Mammary epithelial cell (primary cell): ENCODE measurements at regions of chr11 and their contacts with region 1.

Region 1: DNA sequence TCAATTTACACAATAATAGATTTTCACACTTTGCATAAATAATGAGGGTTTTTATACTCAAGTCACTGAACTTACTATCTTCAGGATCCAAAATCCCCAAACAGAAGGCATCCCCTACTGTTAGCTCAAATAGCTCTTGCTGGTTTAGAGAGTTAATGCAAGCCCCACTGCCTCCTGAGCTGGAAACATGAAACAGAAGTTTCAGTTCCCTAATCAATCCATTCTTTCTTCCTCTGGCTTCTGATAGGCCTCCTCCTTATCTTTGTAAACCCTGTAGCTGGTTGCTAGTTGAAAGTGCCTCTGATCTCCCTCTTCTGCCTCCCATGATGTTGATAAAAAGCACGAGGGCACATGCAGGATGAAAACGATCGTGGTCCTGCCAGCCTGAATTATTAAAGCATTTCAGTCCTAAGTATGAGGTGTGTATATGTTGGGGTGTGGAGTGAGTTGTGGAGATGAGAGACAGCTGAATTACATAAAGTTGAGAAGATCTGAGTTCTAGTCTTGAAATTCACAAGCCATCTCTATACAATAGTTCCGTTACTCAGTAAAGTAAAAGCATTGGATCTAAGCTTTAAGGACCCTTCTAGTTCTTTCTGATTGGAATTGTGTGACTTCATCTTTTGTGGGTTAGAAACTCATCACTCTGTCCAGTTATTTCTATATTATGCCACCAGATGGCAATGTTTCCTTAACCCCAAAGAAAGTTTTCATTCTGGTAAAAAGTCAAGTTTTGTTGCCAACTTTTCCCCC is 35.0 kb upstream of the EHF start:
- DNase-seq: peak; percentile 55
- H3K4me3 ChIP-seq: no peak overlapping the region
- H3K27ac ChIP-seq: no peak overlapping the region
- H3K4me1 ChIP-seq: no peaks in the 10 kb centered on the region
- H3K27me3 ChIP-seq: no peaks in the 10 kb centered on the region
- CTCF ChIP-seq: peak; percentile 52 to 70

Region 2: GRCh38 chr11:33445761-33446161 is 1140.2 kb before region 1 on chr11:
- CTCF ChIA-PET with region 1: no interaction called
- dilution Hi-C with region 1: no loop called
- in situ Hi-C with region 1: no loop called
- intact Hi-C with region 1: no loop called
- DNase-seq: no peak
- H3K4me3 ChIP-seq: no peak overlapping the region
- H3K27ac ChIP-seq: no peak overlapping the region
- H3K4me1 ChIP-seq: peaks cover 10% of the 10 kb centered on the region
- H3K27me3 ChIP-seq: no peaks in the 10 kb centered on the region
- CTCF ChIP-seq: no peak

Region 3: DNA sequence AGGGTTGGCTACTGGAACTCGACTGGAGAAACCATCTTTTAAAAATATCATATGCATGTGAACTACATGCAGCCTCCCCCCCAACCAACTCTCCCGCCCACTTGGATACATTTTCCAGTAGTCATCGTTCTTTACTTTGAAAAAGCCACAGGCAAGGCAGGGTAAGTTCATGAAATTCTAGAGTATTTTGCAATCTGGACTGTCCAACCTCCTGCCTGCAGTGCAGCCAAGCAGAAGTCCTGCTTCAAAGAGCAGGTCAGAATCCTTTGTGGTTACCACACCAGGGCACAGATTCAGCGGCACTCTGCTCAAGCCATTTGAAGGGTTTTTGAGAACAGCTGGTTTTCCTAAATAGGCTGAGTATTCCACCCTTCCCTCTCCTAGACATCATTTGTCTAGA is 84.4 kb before region 1 on chr11:
- CTCF ChIA-PET with region 1: no interaction called
- dilution Hi-C with region 1: no loop called
- in situ Hi-C with region 1: no loop called
- intact Hi-C with region 1: no loop called
- DNase-seq: peak; percentile 59
- H3K4me3 ChIP-seq: no peak overlapping the region
- H3K27ac ChIP-seq: no peak overlapping the region
- H3K4me1 ChIP-seq: peaks cover 11% of the 10 kb centered on the region
- H3K27me3 ChIP-seq: no peaks in the 10 kb centered on the region
- CTCF ChIP-seq: no peak

Region 4: GRCh38 chr11:34512840-34513681 is 72.8 kb before region 1 on chr11:
- CTCF ChIA-PET with region 1: no interaction called
- dilution Hi-C with region 1: no loop called
- in situ Hi-C with region 1: no loop called
- intact Hi-C with region 1: loop called (anchors 2 kb)
- DNase-seq: peak; percentile 29
- H3K4me3 ChIP-seq: no peak overlapping the region
- H3K27ac ChIP-seq: no peak overlapping the region
- H3K4me1 ChIP-seq: no peaks in the 10 kb centered on the region
- H3K27me3 ChIP-seq: no peaks in the 10 kb centered on the region
- CTCF ChIP-seq: peak; percentile 88 to 92

Region 5: GRCh38 chr11:34626393-34626792 is 40.5 kb after region 1 on chr11:
- CTCF ChIA-PET with region 1: interaction called, 3 read pairs
- dilution Hi-C with region 1: no loop called
- in situ Hi-C with region 1: no loop called
- intact Hi-C with region 1: loop called (anchors 2 kb)
- DNase-seq: peak; percentile 77
- H3K4me3 ChIP-seq: no peak overlapping the region
- H3K27ac ChIP-seq: peak overlapping the region; percentile 63
- H3K4me1 ChIP-seq: peaks cover 31% of the 10 kb centered on the region
- H3K27me3 ChIP-seq: no peaks in the 10 kb centered on the region
- CTCF ChIP-seq: no peak

Region 6: GRCh38 chr11:34653826-34654490 is 68.0 kb after region 1 on chr11:
- CTCF ChIA-PET with region 1: interaction called, 3 read pairs
- dilution Hi-C with region 1: no loop called
- in situ Hi-C with region 1: no loop called
- intact Hi-C with region 1: loop called (anchors 1 kb)
- DNase-seq: peak; percentile 98
- H3K4me3 ChIP-seq: no peak overlapping the region
- H3K27ac ChIP-seq: peak overlapping the region; percentile 78
- H3K4me1 ChIP-seq: peaks cover 42% of the 10 kb centered on the region
- H3K27me3 ChIP-seq: no peaks in the 10 kb centered on the region
- CTCF ChIP-seq: peak in 1 of 2 donors; percentile 50

Region 7: GRCh38 chr11:34680918-34681554 is 95.1 kb after region 1 on chr11:
- CTCF ChIA-PET with region 1: interaction called, 8 read pairs
- dilution Hi-C with region 1: no loop called
- in situ Hi-C with region 1: no loop called
- intact Hi-C with region 1: loop called (anchors 2 kb)
- DNase-seq: peak; percentile 90
- H3K4me3 ChIP-seq: no peak overlapping the region
- H3K27ac ChIP-seq: peak overlapping the region; percentile 60
- H3K4me1 ChIP-seq: peaks cover 36% of the 10 kb centered on the region
- H3K27me3 ChIP-seq: no peaks in the 10 kb centered on the region
- CTCF ChIP-seq: no peak

Region 8: DNA sequence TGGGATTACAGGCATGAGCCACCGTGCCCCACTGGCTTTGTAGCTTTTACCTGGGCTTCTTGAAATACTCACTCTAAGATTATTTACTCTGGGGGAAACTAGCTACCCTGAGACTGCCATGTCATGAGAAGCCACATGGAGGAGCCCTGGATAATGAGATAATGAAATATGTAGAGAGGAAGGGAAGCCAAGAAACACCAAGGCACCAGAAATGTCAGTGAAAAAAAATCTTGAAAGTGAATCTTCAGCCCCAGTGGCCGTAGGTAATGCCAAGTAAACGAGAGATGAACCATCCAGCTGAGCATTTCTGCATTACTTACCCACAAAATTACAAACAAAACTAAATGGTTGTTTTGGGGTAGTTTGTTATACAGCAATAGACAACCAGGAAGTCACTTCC is 204.7 kb after region 1 on chr11:
- CTCF ChIA-PET with region 1: interaction called, 4 read pairs
- dilution Hi-C with region 1: no loop called
- in situ Hi-C with region 1: no loop called
- intact Hi-C with region 1: loop called (anchors 1 kb)
- DNase-seq: peak; percentile 23
- H3K4me3 ChIP-seq: no peak overlapping the region
- H3K27ac ChIP-seq: no peak overlapping the region
- H3K4me1 ChIP-seq: no peaks in the 10 kb centered on the region
- H3K27me3 ChIP-seq: no peaks in the 10 kb centered on the region
- CTCF ChIP-seq: peak; percentile 19 to 58